OCI-LY7 (cell line): ENCODE measurements at regions of chr2 and their contacts with region 1.

Region 1: GRCh38 chr2:199979832-199980628 is 24.6 kb downstream of the MAIP1 start:
- DNase-seq: peak; percentile 73
- H3K4me3 ChIP-seq: no peak overlapping the region
- H3K27ac ChIP-seq: no peak overlapping the region
- H3K4me1 ChIP-seq: no peaks in the 10 kb centered on the region
- CTCF ChIP-seq: peak; percentile 95

Region 2: GRCh38 chr2:199663157-199663556 is 316.9 kb before region 1 on chr2:
- CTCF ChIA-PET with region 1: no interaction called
- POLR2A ChIA-PET with region 1: no interaction called
- intact Hi-C with region 1: no loop called
- DNase-seq: peak; percentile 5
- H3K4me3 ChIP-seq: no peak overlapping the region
- H3K27ac ChIP-seq: no peak overlapping the region
- H3K4me1 ChIP-seq: no peaks in the 10 kb centered on the region
- CTCF ChIP-seq: no peak

Region 3: DNA sequence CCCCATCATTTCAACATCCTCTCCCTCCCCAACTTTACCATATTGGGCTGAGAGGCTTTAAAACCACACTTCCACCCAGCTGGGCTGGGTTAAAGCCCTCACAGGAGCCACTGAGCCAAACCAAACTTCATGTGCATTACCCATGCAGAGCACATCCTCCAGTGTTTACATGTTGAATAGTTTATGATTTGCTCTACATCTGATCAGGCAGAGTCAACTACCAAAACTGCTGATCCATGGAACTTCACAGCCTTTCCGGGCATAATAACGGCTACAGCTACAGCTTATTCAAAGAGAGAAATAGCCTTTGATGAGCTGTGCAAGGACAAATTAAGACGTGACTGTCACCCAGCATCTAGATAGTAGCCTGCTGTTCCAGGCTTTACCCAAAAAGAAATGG is 14.3 kb after region 1 on chr2:
- CTCF ChIA-PET with region 1: no interaction called
- POLR2A ChIA-PET with region 1: no interaction called
- intact Hi-C with region 1: no loop called
- DNase-seq: no peak
- H3K4me3 ChIP-seq: no peak overlapping the region
- H3K27ac ChIP-seq: no peak overlapping the region
- H3K4me1 ChIP-seq: no peaks in the 10 kb centered on the region
- CTCF ChIP-seq: no peak

Region 4: DNA sequence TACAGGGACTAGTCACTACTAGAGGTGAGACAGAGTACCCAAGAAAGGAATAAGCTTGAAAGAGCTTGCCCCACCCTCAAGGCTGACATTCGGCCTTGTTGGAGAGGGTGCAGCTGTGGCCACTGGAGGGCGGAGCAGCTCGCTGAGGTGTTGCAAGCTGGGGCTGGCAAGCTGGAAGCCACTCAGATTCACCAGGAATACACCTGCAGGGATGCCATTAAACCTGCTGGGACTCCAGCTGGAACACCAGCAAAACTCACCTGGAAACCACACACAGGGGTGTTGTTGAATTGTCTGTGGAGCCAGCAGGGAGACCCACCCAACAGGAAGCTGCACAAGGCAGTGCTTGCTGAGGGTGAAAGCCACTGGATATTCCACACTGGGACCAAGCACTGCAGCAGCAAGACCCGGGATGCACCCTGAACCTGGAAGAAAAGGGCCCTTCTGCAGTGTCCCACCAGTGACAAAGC is 503.7 kb after region 1 on chr2:
- CTCF ChIA-PET with region 1: interaction called, 3 read pairs
- POLR2A ChIA-PET with region 1: no interaction called
- intact Hi-C with region 1: loop called (anchors 2 kb)
- DNase-seq: peak; percentile 57
- H3K4me3 ChIP-seq: no peak overlapping the region
- H3K27ac ChIP-seq: no peak overlapping the region
- H3K4me1 ChIP-seq: no peaks in the 10 kb centered on the region
- CTCF ChIP-seq: peak; percentile 80

Region 5: GRCh38 chr2:200578778-200579177 is 598.7 kb after region 1 on chr2:
- CTCF ChIA-PET with region 1: no interaction called
- POLR2A ChIA-PET with region 1: no interaction called
- intact Hi-C with region 1: loop called (anchors 10 kb)
- DNase-seq: peak; percentile 19
- H3K4me3 ChIP-seq: no peak overlapping the region
- H3K27ac ChIP-seq: no peak overlapping the region
- H3K4me1 ChIP-seq: peaks cover 3% of the 10 kb centered on the region
- CTCF ChIP-seq: peak; percentile 79